Stomach (tissue), 19 donors: ENCODE measurements at regions of chr2 and their contacts with region 1.

Region 1: DNA sequence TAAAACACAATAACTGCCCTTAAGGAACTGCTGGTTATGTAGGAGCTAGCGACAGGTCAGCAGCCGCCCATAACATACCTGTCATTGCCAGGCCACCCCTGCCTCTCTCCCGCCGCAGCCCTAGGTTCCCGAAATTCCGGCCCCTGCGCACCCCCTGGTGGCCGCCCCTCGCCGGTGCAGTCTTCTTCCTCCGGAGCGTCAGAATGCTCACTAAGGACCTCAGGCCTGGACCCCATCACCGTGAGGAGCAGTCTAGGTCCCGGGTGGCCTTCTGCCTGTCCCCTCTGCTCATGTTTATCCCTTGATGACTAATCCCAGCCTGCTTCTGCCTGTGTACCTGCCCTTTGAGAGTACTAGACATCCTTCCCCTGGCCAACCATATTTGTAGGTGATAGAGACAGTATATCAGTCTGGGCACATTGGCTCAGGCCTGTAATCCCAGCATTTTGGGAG is 115.7 kb upstream of the SLC1A4 start:
- DNase-seq: peak; percentile 87 to 88
- H3K4me3 ChIP-seq: peak overlapping the region in 2 of 4 donors; percentile 25
- H3K27ac ChIP-seq: no peak overlapping the region
- H3K4me1 ChIP-seq: peaks cover 0 to 19% (median 14%) of the 10 kb centered on the region in 4 donors
- H3K27me3 ChIP-seq: no peaks in the 10 kb centered on the region
- CTCF ChIP-seq: peak in 5 of 7 experiments; percentile 76 to 99 (median 95)
- EP300 ChIP-seq: no peak
- POLR2A ChIP-seq: no peak

Region 2: GRCh38 chr2:64582774-64583340 is 290.6 kb before region 1 on chr2:
- intact Hi-C with region 1: loop called (anchors 5 kb)
- DNase-seq: no peak
- H3K4me3 ChIP-seq: no peak overlapping the region
- H3K27ac ChIP-seq: no peak overlapping the region
- H3K4me1 ChIP-seq: peaks cover 0 to 9% (median 2%) of the 10 kb centered on the region in 4 donors
- H3K27me3 ChIP-seq: no peaks in the 10 kb centered on the region
- CTCF ChIP-seq: no peak
- EP300 ChIP-seq: no peak
- POLR2A ChIP-seq: no peak